ENCODE measurements at regions of chr1 and their contacts with region 1.

Region 1: DNA sequence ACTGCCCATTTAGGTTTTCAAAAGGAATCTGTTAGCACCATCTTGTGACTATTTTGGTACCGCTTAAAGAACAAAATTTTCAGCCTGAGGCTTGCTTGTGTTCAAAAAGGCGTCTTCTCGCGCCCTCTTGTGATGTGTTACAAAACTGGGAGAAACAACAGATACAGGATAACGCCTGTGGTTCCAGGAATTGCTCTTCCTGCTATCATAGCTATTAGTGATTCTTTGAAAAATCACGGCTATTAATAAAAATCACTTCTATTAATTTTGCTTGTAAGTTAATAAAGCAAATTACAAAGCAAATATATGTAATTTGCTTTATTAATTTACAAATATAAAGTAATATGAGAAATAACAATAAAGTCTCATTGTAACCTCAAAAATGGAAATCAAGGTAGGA is 82.2 kb upstream of the ABCD3 start:
- DNase-seq: peak; percentile 93
- ATAC-seq: peak; percentile 89
- H3K4me3 ChIP-seq: no peak overlapping the region
- H3K27ac ChIP-seq: no peak overlapping the region
- H3K4me1 ChIP-seq: peaks cover 15 to 35% of the 10 kb centered on the region in 2 experiments
- H3K27me3 ChIP-seq: no peaks in the 10 kb centered on the region
- CTCF ChIP-seq: peak; percentile 67 to 100 (median 98)
- POLR2A ChIP-seq: no peak
- RAD21 ChIP-seq: peak; percentile 100

Region 2: DNA sequence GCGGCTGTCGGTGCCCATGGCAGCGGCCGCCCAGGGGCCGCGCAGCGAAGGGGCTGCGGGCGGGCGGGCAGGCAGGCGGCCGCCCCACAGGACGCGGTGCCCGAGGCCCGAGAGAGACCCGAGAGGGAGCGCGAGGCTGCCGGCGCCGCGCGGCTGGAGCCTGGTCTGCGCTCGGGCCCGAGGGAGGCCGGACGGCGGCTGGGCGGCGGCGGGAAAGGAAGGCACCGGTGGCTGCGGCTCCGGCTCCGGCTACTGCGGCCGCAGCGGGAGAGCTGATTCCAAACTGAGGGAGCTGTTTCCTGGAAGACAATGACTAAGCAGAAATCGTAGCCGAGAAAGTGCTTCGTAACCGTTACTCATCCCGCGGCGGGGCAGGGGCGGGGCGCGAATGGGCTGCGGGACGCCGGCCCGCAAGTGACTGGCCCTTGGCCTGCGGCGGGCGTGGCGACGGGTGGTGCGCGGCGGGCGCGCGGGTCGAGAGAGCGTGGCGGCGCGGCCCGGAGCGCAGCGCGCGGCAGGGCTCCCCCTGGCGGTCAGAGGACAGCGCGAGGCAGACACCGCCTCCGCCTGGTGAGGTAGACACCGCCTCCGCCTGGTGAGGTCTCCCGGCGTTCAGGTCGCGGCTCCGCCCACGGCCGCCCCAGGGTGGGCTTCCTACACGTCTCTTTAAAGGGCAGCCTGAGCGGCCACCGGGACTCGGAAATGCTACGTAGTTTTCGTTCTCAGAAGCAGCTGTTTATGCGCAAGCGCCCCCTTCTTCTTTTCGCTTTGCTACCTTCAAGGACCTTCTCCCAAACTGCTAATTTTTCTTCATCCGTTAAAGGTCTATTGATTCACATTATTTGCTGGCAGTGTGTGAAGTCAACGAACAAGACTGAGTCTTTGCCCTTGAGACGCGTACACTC is 426.6 kb before region 1 on chr1 and contains the start of gene GCLM:
- CTCF ChIA-PET with region 1: no interaction called
- POLR2A ChIA-PET with region 1: no interaction called
- RAD21 ChIA-PET with region 1: interaction called, 3 read pairs
- intact Hi-C with region 1: loop called (anchors 10 kb)
- DNase-seq: peak; percentile 81
- ATAC-seq: peak; percentile 94
- H3K4me3 ChIP-seq: peak within 1 kb of the TSS; percentile 71 to 82
- H3K27ac ChIP-seq: peak within 1 kb of the TSS; percentile 88
- H3K4me1 ChIP-seq: peaks cover 7 to 34% of the 10 kb centered on the region in 2 experiments; a peak in 3 of 4 replicates
- H3K27me3 ChIP-seq: no peaks in the 10 kb centered on the region
- CTCF ChIP-seq: peak; percentile 75 to 96 (median 80)
- POLR2A ChIP-seq: no peak
- RAD21 ChIP-seq: peak; percentile 36; the same call in 1 of the 2 replicates
- total RNA-seq, gene GCLM: 28.9 TPM

Region 3: DNA sequence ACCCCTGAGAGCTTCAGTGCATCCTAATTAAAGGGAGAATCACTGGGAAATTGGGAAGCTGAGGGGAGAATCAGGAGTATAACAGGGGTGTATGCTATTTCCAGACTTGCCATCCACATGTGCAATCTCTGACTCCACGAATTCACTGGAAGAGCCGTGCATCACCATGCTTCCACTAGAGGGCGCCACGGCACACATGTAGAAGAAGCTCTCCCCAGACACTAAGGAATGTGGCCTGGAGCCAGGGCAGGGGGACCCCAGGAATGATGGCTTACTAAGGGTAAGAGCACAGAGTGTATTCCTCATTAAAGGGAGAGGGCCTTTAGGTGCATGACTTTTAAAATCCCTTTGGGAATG is 296.5 kb before region 1 on chr1:
- CTCF ChIA-PET with region 1: interaction called, 338 read pairs
- POLR2A ChIA-PET with region 1: interaction called, 8 read pairs
- RAD21 ChIA-PET with region 1: interaction called, 21 to 22 read pairs
- intact Hi-C with region 1: loop called (anchors 1 kb)
- DNase-seq: peak; percentile 56
- ATAC-seq: peak; percentile 89
- H3K4me3 ChIP-seq: no peak overlapping the region
- H3K27ac ChIP-seq: no peak overlapping the region
- H3K4me1 ChIP-seq: peaks cover 2 to 12% of the 10 kb centered on the region in 2 experiments; a peak in 3 of 4 replicates
- H3K27me3 ChIP-seq: no peaks in the 10 kb centered on the region
- CTCF ChIP-seq: peak; percentile 87 to 99 (median 97)
- POLR2A ChIP-seq: no peak
- RAD21 ChIP-seq: peak; percentile 82

Region 4: GRCh38 chr1:94061513-94062443 is 274.2 kb before region 1 on chr1:
- CTCF ChIA-PET with region 1: interaction called, 255 read pairs
- POLR2A ChIA-PET with region 1: interaction called, 38 read pairs
- RAD21 ChIA-PET with region 1: interaction called, 14 to 49 read pairs
- intact Hi-C with region 1: loop called (anchors 1 kb)
- DNase-seq: peak; percentile 67
- ATAC-seq: peak; percentile 94
- H3K4me3 ChIP-seq: no peak overlapping the region
- H3K27ac ChIP-seq: no peak overlapping the region
- H3K4me1 ChIP-seq: peaks cover 18 to 36% of the 10 kb centered on the region in 2 experiments
- H3K27me3 ChIP-seq: no peaks in the 10 kb centered on the region
- CTCF ChIP-seq: peak; percentile 90 to 96 (median 92)
- POLR2A ChIP-seq: no peak
- RAD21 ChIP-seq: peak; percentile 99

Region 5: DNA sequence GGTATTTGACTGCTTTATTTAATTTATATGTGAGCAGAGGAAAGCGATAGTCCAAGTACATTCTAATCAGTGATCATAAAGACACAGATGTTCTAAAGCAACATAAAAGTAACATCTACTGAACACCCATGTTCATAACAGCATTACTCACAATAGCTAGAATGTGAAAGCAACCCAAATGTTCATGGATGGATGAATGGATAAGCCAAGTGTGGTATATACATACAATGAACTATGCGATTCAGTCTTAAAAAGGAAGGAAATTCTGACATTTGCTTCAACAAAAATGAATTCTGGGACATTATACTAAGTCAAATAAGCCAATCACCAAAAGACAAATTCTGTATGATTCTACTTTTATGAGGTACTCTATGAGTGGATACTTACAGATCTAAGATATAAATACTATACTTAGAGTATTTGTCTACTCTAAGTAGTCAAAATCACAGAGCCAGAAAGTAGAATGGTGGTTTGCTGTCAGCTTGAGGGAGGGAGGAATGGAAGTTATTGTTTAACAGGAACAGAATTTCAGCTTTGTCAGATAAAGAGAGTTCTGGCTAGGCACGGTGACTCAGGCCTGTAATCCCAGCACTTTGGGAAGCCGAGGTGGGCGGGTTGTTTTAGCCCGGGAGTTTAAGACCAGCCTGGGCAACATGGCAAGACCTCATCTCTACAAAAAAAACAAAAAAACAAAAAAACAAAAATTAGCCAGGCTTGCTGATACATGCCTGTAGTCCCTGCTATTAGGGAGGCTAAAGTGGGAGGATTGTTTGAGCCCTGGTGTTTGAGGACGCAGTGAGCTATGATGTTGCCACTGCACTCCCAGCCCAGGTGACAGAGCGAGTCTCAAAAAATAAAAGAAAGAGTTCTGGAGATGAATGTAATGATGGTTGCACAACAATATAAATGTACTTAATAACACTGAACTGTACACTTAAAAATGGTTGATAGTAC is 18.8 kb before region 1 on chr1:
- CTCF ChIA-PET with region 1: interaction called, 10 read pairs
- POLR2A ChIA-PET with region 1: no interaction called
- RAD21 ChIA-PET with region 1: no interaction called
- intact Hi-C with region 1: no loop called
- DNase-seq: no peak
- ATAC-seq: peak; percentile 70
- H3K4me3 ChIP-seq: no peak overlapping the region
- H3K27ac ChIP-seq: peak overlapping the region; percentile 63
- H3K4me1 ChIP-seq: peaks cover 75 to 88% of the 10 kb centered on the region in 2 experiments
- H3K27me3 ChIP-seq: no peaks in the 10 kb centered on the region
- CTCF ChIP-seq: no peak
- POLR2A ChIP-seq: no peak
- RAD21 ChIP-seq: no peak

Measured in HCT116 (cell line).